Activated CD8-positive, alpha-beta T cell treated with anti-CD3 and anti-CD28 coated beads, Interleukin-2, amount 10 ng/mL, durations not matched to agents 7 days and 5 days (primary cell): ENCODE measurements at regions of chr6 and their contacts with region 1.

Region 1: GRCh38 chr6:170584181-170584953 is at the start of gene PDCD2:
- DNase-seq: peak; percentile 95
- ATAC-seq: peak; percentile 96
- H3K4me3 Mint-ChIP-seq: peak within 1 kb of the TSS; percentile 99
- H3K27ac Mint-ChIP-seq: peak within 1 kb of the TSS; percentile 97
- H3K4me1 Mint-ChIP-seq: peaks cover 30% of the 10 kb centered on the region
- H3K27me3 Mint-ChIP-seq: no peaks in the 10 kb centered on the region
- total RNA-seq, gene PDCD2: 74.0 to 77.1 TPM

Region 2: GRCh38 chr6:170554013-170554795 is 30.2 kb before region 1 on chr6 and contains the start of gene TBP:
- CTCF ChIA-PET with region 1: interaction called, 13 read pairs
- POLR2A ChIA-PET with region 1: interaction called, 37 read pairs
- DNase-seq: peak; percentile 99
- ATAC-seq: peak; percentile 95
- H3K4me3 Mint-ChIP-seq: no peak within 1 kb of the TSS
- H3K27ac Mint-ChIP-seq: no peak within 1 kb of the TSS
- H3K4me1 Mint-ChIP-seq: peaks cover 35% of the 10 kb centered on the region
- H3K27me3 Mint-ChIP-seq: no peaks in the 10 kb centered on the region
- total RNA-seq, gene TBP: 20.0 to 21.5 TPM